GM12878 (cell line): ENCODE measurements at regions of chr22 and their contacts with region 1.

Region 1: GRCh38 chr22:39152511-39153219 is at the start of gene CBX7:
- DNase-seq: peak; percentile 46
- ATAC-seq: peak; percentile 79
- H3K4me3 ChIP-seq: peak within 1 kb of the TSS; percentile 80
- H3K27ac ChIP-seq: peak within 1 kb of the TSS; percentile 73
- H3K4me1 ChIP-seq: peaks cover 41% of the 10 kb centered on the region
- H3K27me3 ChIP-seq: peaks cover 3 to 12% of the 10 kb centered on the region in 2 experiments
- CTCF ChIP-seq: no peak
- EP300 ChIP-seq: no peak
- POLR2A ChIP-seq: peak; percentile 73
- RAD21 ChIP-seq: no peak
- polyA plus RNA-seq, gene CBX7: 0.18 to 0.64 TPM

Region 2: DNA sequence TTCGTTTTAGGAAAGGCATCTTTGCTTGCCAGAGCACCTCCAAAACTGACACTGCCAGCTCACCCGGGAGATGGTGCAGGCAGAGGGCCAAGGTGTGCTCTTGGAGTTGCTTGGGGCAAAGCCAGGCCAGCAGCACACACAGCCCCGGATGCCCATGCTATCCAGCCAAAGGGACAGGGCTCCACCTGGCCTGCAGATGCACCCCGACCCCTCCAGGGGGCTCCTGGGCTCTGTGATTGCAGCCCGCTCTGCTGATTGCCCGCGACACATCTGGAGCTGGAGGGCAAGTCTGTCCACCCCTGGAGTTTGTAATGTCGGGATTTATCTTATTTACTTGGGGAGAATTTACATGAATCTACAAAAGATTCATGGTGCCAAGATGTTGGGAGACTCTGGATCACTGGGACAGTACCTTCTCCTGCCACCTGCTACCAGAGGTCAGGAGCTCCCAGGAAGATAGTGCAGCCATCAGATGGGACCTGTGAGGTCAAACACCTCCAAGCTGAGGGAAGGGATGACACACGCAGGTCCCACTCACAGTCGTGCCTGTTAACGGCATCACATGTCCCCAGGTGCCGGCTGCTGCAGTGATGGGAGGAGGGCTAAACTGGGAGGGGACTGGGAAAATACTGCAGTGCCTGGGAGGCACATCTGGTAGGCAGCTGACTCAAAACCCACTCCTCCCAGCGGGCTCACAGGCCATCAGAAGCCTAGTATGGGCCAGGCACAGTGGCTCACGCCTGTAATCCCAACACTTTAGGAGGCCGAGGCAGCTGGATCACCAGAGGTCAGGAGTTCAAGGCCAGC is 17.4 kb before region 1 on chr22:
- CTCF ChIA-PET with region 1: interaction called, 18 read pairs
- POLR2A ChIA-PET with region 1: interaction called, 3 read pairs
- RAD21 ChIA-PET with region 1: interaction called, 7 read pairs
- SMC1A ChIA-PET with region 1: interaction called, 4 read pairs
- in situ Hi-C with region 1: no loop called
- intact Hi-C with region 1: no loop called
- DNase-seq: no peak
- ATAC-seq: peak; percentile 96
- H3K4me3 ChIP-seq: no peak overlapping the region
- H3K27ac ChIP-seq: no peak overlapping the region
- H3K4me1 ChIP-seq: no peaks in the 10 kb centered on the region
- H3K27me3 ChIP-seq: no peaks in the 10 kb centered on the region
- CTCF ChIP-seq: peak; percentile 63 to 79 (median 68)
- EP300 ChIP-seq: no peak
- POLR2A ChIP-seq: no peak
- RAD21 ChIP-seq: peak; percentile 59

Region 3: DNA sequence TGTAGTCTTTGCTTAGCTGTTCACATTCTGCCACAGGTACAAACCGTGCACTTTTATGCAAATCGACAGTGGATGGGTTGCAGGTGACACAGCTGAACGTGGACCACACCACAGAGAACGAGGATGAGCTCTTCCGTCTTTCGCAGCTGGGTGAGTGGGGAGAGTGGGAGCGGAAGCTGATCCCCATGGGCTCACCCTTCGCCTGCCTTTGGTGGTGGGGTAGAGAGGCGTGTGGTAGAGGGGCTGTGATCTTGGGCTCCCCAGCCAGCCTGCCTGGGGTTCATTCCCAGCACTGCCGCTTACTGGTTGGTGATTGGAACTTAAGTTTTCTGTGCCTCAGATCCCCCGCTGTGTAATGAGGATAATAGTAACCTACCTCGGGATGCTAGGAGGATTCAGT is 266.0 kb after region 1 on chr22:
- CTCF ChIA-PET with region 1: no interaction called
- POLR2A ChIA-PET with region 1: no interaction called
- RAD21 ChIA-PET with region 1: no interaction called
- SMC1A ChIA-PET with region 1: no interaction called
- in situ Hi-C with region 1: no loop called
- intact Hi-C with region 1: no loop called
- DNase-seq: no peak
- ATAC-seq: no peak
- H3K4me3 ChIP-seq: no peak overlapping the region
- H3K27ac ChIP-seq: no peak overlapping the region
- H3K4me1 ChIP-seq: no peaks in the 10 kb centered on the region
- H3K27me3 ChIP-seq: no peaks in the 10 kb centered on the region
- CTCF ChIP-seq: no peak
- EP300 ChIP-seq: no peak
- POLR2A ChIP-seq: no peak
- RAD21 ChIP-seq: no peak